Gastrocnemius medialis (tissue), 4 donors: ENCODE measurements at regions of chr5 and their contacts with region 1.

Region 1: DNA sequence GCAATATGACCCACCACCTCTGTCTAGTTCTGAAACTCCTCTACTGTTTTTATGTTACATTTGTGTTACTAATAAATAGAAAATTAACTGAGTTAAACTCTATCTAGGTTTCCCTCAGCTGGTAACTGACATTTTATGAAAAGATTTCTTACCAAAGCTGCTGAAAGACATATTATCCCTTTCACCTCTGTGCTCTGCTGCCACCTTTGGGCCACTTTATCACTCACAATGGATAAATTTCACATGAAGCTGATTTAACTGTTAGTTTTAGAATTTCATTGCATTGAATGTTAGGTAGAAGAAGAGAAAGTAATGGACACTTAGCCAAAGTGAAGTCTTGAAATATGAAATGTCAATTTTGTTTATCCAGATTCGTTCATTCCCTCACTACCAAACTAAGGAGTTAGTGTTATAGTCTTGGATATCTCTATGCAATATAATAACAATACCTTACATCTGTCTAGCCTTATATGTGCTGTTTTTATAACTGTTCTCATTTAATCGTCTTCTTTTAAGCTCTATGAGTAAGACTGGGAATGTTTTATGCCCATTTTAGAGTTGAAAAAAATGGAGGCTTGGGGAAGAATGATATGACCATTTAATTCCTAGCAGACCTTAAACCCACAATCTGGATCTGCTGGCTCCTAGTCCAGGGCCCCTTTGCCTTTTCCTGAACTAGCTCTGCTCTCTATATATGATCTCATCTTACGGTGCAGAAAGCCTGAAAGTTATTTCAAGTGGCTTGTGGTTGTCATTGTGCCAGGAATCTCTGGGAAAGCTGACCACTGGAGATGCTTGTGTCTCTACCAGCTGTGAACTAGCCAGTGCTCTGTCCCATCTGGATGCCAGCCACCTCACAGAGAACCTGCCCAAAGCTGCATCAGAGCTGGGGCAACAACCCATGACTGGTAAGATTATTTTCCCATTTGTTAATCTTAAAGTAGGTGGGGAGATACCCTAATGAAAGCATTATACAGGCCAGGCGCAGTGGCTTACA is 97.1 kb downstream of the GOLPH3 start:
- DNase-seq: peak in 1 of 2 donors; percentile 35
- ATAC-seq: peak; percentile 66 to 68
- H3K4me3 ChIP-seq: no peak overlapping the region
- H3K27ac ChIP-seq: no peak overlapping the region
- H3K4me1 ChIP-seq: peaks cover 0 to 9% of the 10 kb centered on the region in 2 donors
- H3K27me3 ChIP-seq: no peaks in the 10 kb centered on the region
- CTCF ChIP-seq: peak; percentile 29 to 79 (median 68)
- POLR2A ChIP-seq: no peak

Region 2: GRCh38 chr5:31581498-31582099 is 495.4 kb before region 1 on chr5:
- in situ Hi-C with region 1: loop called in 2 of 4 experiments (anchors 10 to 25 kb)
- intact Hi-C with region 1: no loop called
- DNase-seq: no peak
- ATAC-seq: no peak
- H3K4me3 ChIP-seq: no peak overlapping the region
- H3K27ac ChIP-seq: no peak overlapping the region
- H3K4me1 ChIP-seq: no peaks in the 10 kb centered on the region
- H3K27me3 ChIP-seq: peaks cover 0 to 4% (median 0%) of the 10 kb centered on the region in 3 donors
- CTCF ChIP-seq: peak; percentile 22 to 57 (median 35)
- POLR2A ChIP-seq: no peak

Region 3: GRCh38 chr5:31825518-31826068 is 251.4 kb before region 1 on chr5:
- in situ Hi-C with region 1: loop called in 1 of 4 experiments (anchors 10 kb)
- intact Hi-C with region 1: loop called (anchors 5 kb)
- DNase-seq: no peak
- ATAC-seq: peak; percentile 74 to 75
- H3K4me3 ChIP-seq: no peak overlapping the region
- H3K27ac ChIP-seq: no peak overlapping the region
- H3K4me1 ChIP-seq: no peaks in the 10 kb centered on the region
- H3K27me3 ChIP-seq: no peaks in the 10 kb centered on the region
- CTCF ChIP-seq: peak; percentile 45 to 69 (median 56)
- POLR2A ChIP-seq: no peak

Region 4: DNA sequence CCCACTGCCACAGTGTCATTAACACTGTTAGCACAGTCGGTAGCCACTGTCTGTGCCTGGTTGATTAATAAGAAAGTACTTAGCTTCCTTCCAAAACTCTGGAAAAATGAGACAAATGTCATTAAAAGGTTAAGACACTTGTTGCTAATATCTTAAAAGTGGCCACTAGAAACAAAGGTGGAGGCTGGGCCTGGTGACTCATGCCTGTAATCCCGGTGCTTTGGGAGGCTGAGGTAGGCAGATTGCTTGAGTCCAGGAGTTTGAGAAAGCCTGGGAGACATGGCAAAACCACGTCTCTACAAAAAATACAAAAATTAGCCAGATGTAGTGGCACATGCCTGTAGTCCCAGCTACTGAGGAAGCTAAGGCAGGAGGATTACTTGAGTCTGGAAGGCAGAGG is 244.0 kb before region 1 on chr5:
- in situ Hi-C with region 1: loop called in 1 of 4 experiments (anchors 10 kb)
- intact Hi-C with region 1: loop called (anchors 5 kb)
- DNase-seq: no peak
- ATAC-seq: no peak
- H3K4me3 ChIP-seq: no peak overlapping the region
- H3K27ac ChIP-seq: no peak overlapping the region
- H3K4me1 ChIP-seq: no peaks in the 10 kb centered on the region
- H3K27me3 ChIP-seq: no peaks in the 10 kb centered on the region
- CTCF ChIP-seq: no peak
- POLR2A ChIP-seq: no peak

Region 5: DNA sequence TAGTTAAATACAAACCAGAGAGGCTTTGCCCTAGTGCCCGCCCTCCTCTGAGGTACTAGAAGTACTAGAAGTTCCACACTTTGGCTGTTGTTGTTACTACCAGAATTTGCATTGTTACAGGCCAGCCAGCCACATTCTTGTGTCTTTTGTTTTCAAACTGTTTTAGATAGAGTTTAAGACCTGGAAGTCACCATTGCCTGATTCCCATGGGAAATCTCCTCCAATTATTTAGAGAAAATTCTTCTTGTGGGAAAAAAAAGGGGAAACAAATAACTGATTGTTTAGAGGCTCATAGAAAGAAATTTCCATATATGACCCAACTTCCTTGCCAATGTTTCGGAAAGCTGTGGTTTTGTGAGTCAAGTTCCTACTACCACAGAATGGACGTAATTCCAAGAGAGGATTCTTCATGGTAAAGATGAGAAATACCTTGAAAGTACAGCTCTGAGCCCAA is 155.1 kb before region 1 on chr5:
- in situ Hi-C with region 1: loop called in 1 of 4 experiments (anchors 10 kb)
- intact Hi-C with region 1: no loop called
- DNase-seq: no peak
- ATAC-seq: peak in 1 of 2 donors; percentile 60
- H3K4me3 ChIP-seq: no peak overlapping the region
- H3K27ac ChIP-seq: no peak overlapping the region
- H3K4me1 ChIP-seq: no peaks in the 10 kb centered on the region
- H3K27me3 ChIP-seq: no peaks in the 10 kb centered on the region
- CTCF ChIP-seq: no peak
- POLR2A ChIP-seq: no peak

Region 6: GRCh38 chr5:31934156-31934555 is 142.8 kb before region 1 on chr5:
- in situ Hi-C with region 1: loop called in 1 of 4 experiments (anchors 10 kb)
- intact Hi-C with region 1: loop called (anchors 2 kb)
- DNase-seq: no peak
- ATAC-seq: no peak
- H3K4me3 ChIP-seq: no peak overlapping the region
- H3K27ac ChIP-seq: no peak overlapping the region
- H3K4me1 ChIP-seq: peaks cover 0 to 3% of the 10 kb centered on the region in 2 donors
- H3K27me3 ChIP-seq: no peaks in the 10 kb centered on the region
- CTCF ChIP-seq: no peak
- POLR2A ChIP-seq: no peak

Region 7: DNA sequence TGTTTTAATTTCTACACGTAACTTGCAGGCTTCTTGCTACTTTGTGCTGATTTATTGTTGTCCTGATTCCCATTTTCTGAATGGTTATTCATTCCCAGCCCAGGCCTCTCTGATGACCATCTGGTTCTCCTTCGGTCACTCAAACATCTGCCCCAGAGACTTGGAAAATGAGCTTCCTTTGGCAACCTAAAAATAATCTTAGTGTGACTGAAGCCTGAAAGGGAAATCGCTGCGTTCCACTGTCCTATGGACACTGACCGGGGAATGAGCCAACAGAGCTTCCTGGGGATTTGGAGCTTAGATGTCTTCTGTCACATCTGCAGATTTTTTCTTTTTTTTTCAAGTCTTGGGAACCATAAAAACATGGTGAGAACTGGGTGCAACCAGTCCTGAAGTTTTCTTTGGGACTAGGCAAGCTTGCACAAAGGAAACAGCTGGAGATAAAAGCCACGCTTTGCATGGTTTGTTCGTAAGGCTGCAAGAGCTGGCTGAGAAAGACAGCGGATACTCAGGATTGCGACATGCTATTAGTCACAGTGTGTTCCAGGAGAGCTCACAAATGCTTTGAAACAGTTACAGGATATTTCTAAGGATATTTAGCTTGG is 49.2 kb before region 1 on chr5:
- in situ Hi-C with region 1: no loop called
- intact Hi-C with region 1: loop called (anchors 5 kb)
- DNase-seq: peak; percentile 81 to 83
- ATAC-seq: peak; percentile 97 to 98
- H3K4me3 ChIP-seq: peak overlapping the region in 3 of 4 donors; percentile 2 to 16 (median 3)
- H3K27ac ChIP-seq: peak overlapping the region; percentile 60 to 73 (median 67)
- H3K4me1 ChIP-seq: peaks cover 25 to 62% of the 10 kb centered on the region in 2 donors
- H3K27me3 ChIP-seq: no peaks in the 10 kb centered on the region
- CTCF ChIP-seq: no peak
- POLR2A ChIP-seq: no peak